Naive thymus-derived CD4-positive, alpha-beta T cell (primary cell): ENCODE measurements at regions of chr6 and their contacts with region 1.

Region 1: GRCh38 chr6:26240154-26241032 is 124.6 kb upstream of the BTN3A2 start:
- DNase-seq: peak; percentile 56 to 90 (median 78)
- ATAC-seq: peak; percentile 87
- H3K4me3 ChIP-seq: peak overlapping the region; percentile 55
- H3K4me3 Mint-ChIP-seq: peak overlapping the region; percentile 80 to 93 (median 89)
- H3K27ac ChIP-seq: peak overlapping the region; percentile 83
- H3K27ac Mint-ChIP-seq: peak overlapping the region; percentile 89 to 99 (median 96)
- H3K4me1 ChIP-seq: peaks cover 6 to 11% of the 10 kb centered on the region in 2 donors
- H3K4me1 Mint-ChIP-seq: peaks cover 8 to 37% (median 25%) of the 10 kb centered on the region in 7 donors
- H3K27me3 ChIP-seq: no peaks in the 10 kb centered on the region
- H3K27me3 Mint-ChIP-seq: no peaks in the 10 kb centered on the region

Region 2: GRCh38 chr6:26183581-26184366 is 56.6 kb before region 1 on chr6:
- CTCF ChIA-PET with region 1: no interaction called
- POLR2A ChIA-PET with region 1: interaction called, 2,165 read pairs
- intact Hi-C with region 1: loop called in 1 of 2 experiments (anchors 2 kb)
- DNase-seq: peak; percentile 43 to 83 (median 77)
- ATAC-seq: peak; percentile 91
- H3K4me3 ChIP-seq: peak overlapping the region; percentile 82
- H3K4me3 Mint-ChIP-seq: peak overlapping the region; percentile 84 to 99 (median 98)
- H3K27ac ChIP-seq: peak overlapping the region; percentile 76
- H3K27ac Mint-ChIP-seq: peak overlapping the region; percentile 83 to 99 (median 90)
- H3K4me1 ChIP-seq: peaks cover 13 to 30% of the 10 kb centered on the region in 2 donors
- H3K4me1 Mint-ChIP-seq: peaks cover 19 to 59% (median 49%) of the 10 kb centered on the region in 7 donors
- H3K27me3 ChIP-seq: no peaks in the 10 kb centered on the region
- H3K27me3 Mint-ChIP-seq: no peaks in the 10 kb centered on the region

Region 3: DNA sequence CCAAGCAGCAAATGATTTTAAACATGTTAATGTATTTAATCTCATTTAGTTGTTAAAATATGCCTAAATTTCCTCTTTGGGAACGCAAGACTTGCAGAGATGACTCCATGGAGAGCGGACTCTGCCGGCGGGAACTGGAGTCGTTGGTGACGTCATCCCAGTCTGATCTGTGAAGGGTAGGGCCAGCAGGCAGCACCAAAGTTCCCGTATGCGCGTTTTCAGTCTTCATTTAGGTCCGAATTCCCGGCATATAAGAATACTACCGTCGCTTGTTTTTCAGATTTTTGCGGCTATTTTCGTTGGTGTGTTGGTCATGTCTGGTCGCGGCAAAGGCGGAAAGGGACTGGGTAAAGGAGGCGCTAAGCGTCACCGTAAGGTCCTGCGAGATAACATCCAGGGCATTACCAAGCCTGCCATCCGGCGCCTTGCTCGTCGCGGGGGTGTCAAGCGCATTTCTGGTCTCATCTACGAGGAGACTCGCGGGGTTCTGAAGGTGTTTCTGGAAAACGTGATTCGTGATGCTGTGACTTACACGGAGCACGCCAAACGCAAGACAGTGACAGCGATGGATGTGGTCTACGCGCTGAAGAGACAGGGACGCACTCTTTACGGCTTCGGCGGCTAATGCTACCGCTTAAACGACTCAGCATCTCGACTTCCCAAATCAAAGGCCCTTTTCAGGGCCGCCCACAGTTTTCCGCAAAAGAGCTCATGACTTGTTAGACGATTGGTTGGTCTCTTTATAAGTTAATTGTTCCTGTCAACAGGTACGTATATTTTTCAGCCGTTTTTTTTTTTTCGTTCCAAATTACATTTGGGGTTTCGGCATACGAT is 35.8 kb before region 1 on chr6:
- CTCF ChIA-PET with region 1: interaction called, 12 read pairs
- POLR2A ChIA-PET with region 1: interaction called, 2,165 read pairs
- intact Hi-C with region 1: loop called in 1 of 2 experiments (anchors 1 kb)
- DNase-seq: peak; percentile 67 to 95 (median 89)
- ATAC-seq: peak; percentile 72
- H3K4me3 ChIP-seq: peak overlapping the region; percentile 77
- H3K4me3 Mint-ChIP-seq: no peak overlapping the region
- H3K27ac ChIP-seq: peak overlapping the region; percentile 90
- H3K27ac Mint-ChIP-seq: no peak overlapping the region
- H3K4me1 ChIP-seq: peaks cover 20 to 23% of the 10 kb centered on the region in 2 donors
- H3K4me1 Mint-ChIP-seq: peaks cover 9 to 36% (median 26%) of the 10 kb centered on the region in 7 donors
- H3K27me3 ChIP-seq: no peaks in the 10 kb centered on the region
- H3K27me3 Mint-ChIP-seq: peaks cover 0 to 5% (median 0%) of the 10 kb centered on the region in 5 donors

Region 4: GRCh38 chr6:26223650-26224546 is 16.5 kb before region 1 on chr6:
- CTCF ChIA-PET with region 1: interaction called, 4 read pairs
- POLR2A ChIA-PET with region 1: interaction called, 2,165 read pairs
- intact Hi-C with region 1: no loop called
- DNase-seq: peak in 7 of 9 donors; percentile 79 to 89 (median 84)
- ATAC-seq: peak; percentile 93
- H3K4me3 ChIP-seq: peak overlapping the region; percentile 77
- H3K4me3 Mint-ChIP-seq: no peak overlapping the region
- H3K27ac ChIP-seq: peak overlapping the region; percentile 77
- H3K27ac Mint-ChIP-seq: no peak overlapping the region
- H3K4me1 ChIP-seq: peaks cover 14 to 18% of the 10 kb centered on the region in 2 donors
- H3K4me1 Mint-ChIP-seq: peaks cover 10 to 25% (median 18%) of the 10 kb centered on the region in 7 donors
- H3K27me3 ChIP-seq: no peaks in the 10 kb centered on the region
- H3K27me3 Mint-ChIP-seq: no peaks in the 10 kb centered on the region